Posterior vena cava (tissue), 2 donors: ENCODE measurements at regions of chr5 and their contacts with region 1.

Region 1: DNA sequence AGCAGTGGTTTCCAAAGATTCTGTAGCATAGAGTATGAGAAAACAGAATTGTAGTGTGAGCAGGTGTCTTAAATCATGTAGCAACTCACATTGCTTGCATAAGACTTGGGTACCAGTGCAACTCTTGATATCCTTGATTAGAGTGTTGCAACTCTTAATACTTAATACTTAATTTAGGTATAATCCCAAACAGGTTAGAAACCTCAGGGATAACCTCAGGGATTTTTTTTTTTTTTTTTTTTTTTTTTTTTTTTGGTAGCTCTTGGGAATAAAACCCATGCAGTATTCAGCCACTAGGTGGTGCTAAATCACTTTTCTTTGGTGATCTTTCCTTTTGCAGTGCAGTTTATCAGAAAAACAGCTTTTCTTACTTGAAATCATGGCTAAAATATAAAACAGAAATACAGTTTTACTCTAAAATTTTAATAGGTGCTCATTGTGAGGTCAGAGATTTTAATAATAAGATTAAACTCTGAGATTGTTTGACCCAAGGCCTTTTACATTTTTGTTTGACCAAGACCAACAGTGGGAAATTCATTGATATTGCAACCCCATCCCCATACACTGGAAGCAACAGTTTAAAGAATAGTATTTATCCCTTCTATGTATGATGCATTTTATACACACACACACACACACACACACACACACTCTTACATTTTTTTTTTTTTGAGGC is 55.3 kb downstream of the ERAP1 start:
- DNase-seq: no peak

Region 2: DNA sequence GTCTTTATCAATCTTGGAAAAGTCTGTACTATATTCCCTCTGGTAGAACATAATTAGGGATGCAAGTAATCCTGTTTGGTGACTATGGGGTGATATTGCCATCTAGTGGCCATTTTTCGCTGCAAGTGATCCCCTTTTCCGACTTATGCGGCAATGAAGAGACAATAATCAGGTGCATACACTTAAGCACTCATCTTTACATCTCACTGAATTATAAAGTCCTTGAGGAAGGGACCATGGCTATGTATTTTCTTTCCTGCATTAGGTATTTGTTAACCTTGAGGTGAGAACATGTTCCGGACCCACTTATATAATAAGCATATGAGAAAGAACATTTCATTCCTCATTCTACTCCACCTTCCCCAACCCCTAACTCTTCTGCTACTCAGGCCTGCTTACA is 409.6 kb after region 1 on chr5:
- intact Hi-C with region 1: loop called in 1 of 2 experiments (anchors 10 kb)
- DNase-seq: no peak